Sciatic nerve (tissue), 2 donors: ENCODE measurements at regions of chr14 and their contacts with region 1.

Region 1: GRCh38 chr14:102928412-102929240 is 6.2 kb downstream of the AMN start:
- DNase-seq: peak; percentile 79
- ATAC-seq: peak; percentile 70

Region 2: DNA sequence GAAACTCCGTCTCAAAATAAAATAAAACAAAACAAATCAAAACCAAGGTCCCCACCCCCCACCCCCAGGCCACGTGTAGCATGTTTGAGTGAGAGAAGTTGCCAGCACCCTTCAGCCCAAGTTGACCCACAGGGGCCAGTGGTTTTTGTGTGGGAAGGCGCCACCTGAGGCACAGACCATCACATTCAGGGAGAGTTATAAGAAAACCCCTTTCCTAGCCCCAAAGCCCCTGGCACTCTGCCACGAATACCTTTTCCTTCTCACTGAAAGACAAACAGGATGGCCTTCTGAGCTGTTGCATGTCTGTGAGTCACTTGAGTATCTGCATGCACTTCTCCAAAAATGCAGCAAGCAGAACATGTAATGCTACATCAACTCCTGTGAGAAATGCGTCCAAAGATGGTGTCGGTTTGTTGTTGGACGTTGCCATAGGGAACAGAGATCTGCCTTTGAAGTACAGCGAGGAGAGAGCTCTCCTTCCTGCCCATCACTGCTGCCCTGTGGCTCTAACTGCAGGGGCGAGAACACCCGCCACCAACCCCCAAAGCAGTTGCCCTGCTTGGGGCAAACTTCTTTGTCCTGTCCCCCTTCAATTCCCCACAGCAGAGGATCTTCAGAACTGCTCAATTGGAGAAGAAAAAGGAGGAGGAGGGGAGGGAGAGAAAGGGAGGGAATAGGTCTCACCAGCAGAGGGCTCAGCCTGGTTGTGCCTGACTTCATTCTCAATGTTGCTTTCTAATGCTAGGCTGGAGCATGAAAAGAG is 154.1 kb before region 1 on chr14:
- intact Hi-C with region 1: loop called (anchors 10 kb)
- DNase-seq: peak; percentile 70
- ATAC-seq: peak; percentile 78